Ovary (tissue), 10 donors: ENCODE measurements at regions of chr16 and their contacts with region 1.

Region 1: DNA sequence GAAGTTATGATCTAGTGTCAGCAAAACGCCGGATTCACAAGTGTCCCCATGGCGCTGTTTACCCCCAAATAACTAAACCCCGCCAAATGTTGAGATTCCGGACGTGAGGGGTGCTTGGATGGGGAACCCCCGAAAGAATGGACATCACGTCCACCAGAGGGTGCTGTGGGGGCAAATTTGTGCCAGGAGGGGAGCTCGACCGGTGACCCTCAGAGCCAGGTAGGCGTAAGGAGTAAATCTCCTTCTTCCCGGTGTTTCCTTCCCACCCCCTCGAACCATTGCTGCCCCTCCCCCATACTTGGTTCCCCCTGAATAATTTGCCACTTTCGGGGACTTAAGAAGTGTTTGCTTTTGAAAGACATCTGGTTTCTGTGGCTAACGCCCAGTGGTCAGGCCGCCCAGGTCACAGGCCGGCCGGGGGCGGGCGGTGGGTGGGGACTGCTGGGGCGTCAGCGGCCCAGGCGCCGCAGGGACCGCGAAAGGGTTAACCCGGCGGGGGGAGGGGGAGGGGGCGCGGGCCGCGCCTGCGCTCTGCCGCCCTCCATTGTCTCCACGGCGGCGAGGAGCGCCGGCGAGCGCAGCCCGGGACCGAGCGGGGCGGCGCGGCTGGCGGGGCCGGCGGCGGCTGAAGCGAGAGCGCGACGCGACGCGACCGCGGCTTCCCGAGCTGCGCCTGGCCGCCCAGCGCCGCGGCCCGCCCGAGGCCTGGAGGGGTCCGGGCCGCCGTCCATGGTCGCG is at the start of gene ZNRF1:
- DNase-seq: peak; percentile 78 to 93 (median 89)
- H3K4me3 ChIP-seq: peak within 1 kb of the TSS; percentile 80
- H3K27ac ChIP-seq: peak within 1 kb of the TSS; percentile 77 to 78
- H3K4me1 ChIP-seq: peaks cover 1% of the 10 kb centered on the region
- H3K27me3 ChIP-seq: no peaks in the 10 kb centered on the region
- CTCF ChIP-seq: peak; percentile 79 to 83 (median 80)
- EP300 ChIP-seq: no peak
- POLR2A ChIP-seq: peak; percentile 30
- total RNA-seq, gene ZNRF1: 16.8 to 27.9 (median 25.0) TPM

Region 2: GRCh38 chr16:74954763-74955162 is 43.9 kb before region 1 on chr16:
- intact Hi-C with region 1: no loop called
- DNase-seq: no peak
- H3K4me3 ChIP-seq: no peak overlapping the region
- H3K27ac ChIP-seq: no peak overlapping the region
- H3K4me1 ChIP-seq: peaks cover 1% of the 10 kb centered on the region
- H3K27me3 ChIP-seq: no peaks in the 10 kb centered on the region
- CTCF ChIP-seq: no peak
- EP300 ChIP-seq: no peak
- POLR2A ChIP-seq: no peak

Region 3: DNA sequence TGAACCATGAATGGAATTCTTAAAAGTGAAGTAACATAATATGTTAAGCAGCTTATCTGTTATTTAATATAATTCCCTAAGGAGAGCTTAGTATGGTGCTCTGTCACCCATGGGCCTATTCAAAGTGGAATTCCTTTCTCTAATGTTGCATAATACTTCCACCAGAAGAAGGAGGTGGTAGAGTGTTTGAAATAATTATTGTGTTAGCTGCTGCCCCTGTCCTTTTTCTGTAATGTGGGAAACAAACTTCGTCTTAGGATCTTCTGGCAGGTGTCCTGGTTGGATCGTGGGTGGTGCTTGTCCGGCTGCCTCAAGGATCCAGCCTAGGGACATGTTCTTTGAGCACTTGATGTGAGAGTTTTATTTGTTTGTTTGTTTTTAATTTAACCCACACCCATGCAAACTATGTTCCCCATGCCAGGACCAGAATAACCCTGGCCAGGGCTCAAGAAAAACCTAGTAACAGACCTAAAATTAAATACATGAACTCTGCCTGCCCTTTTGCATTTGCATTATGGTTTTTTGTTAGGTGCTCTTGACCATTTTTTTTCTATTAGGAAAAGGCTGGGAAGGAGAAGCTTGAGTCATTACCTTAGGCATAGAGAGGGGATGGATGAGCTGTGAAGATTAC is 46.3 kb after region 1 on chr16:
- intact Hi-C with region 1: loop called in 1 of 4 experiments (anchors 5 kb)
- DNase-seq: peak in 4 of 5 donors; percentile 28 to 48 (median 38)
- H3K4me3 ChIP-seq: no peak overlapping the region
- H3K27ac ChIP-seq: peak overlapping the region in 1 of 2 donors; percentile 58
- H3K4me1 ChIP-seq: peaks cover 17% of the 10 kb centered on the region
- H3K27me3 ChIP-seq: no peaks in the 10 kb centered on the region
- CTCF ChIP-seq: no peak
- EP300 ChIP-seq: no peak
- POLR2A ChIP-seq: no peak

Region 4: DNA sequence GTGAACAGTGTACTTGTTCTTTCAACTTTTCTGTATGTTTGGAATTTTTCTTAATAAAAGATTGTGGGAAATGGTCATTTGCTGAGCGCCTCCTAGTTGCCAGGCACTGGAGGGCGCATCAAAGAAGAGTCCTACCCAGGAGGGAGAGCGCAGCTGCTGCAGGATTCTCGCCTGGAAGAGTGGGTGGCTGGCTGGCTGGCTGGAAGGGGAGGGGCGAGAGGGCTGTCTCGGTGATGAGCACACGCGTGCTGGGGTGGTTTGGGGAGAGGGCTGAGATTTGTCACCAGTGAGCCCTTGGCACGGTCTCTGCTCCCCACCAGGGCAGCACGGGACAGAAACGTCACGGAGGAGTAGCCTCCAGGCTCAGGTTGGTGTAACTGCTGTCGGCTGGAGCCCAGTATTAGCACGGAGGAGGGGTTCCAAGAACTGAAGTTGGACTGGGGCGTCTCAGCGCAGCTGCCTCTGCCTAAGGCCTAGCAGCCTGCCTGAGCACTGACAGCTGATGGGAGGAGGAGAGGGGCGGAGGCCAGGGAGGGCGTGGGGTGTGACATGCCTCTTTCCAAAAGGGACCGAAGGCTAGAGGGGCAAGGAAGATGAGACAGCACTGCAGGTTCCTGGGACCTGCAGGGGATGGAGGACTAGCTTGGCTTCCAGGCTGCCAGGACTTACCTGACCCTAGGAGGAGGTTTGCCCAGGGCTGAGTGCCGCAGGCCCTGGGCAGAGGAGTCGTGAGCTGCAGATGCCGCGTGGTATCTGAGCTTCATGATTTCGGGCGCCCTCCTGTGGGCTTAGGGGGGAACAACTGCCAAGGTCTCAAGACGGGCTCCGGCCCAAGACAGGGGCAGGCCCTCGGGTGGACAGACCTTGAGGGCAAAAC is 112.2 kb after region 1 on chr16:
- intact Hi-C with region 1: loop called (anchors 1 to 5 kb)
- DNase-seq: peak; percentile 87 to 95 (median 94)
- H3K4me3 ChIP-seq: peak overlapping the region; percentile 13
- H3K27ac ChIP-seq: peak overlapping the region; percentile 14 to 76
- H3K4me1 ChIP-seq: peaks cover 36% of the 10 kb centered on the region
- H3K27me3 ChIP-seq: no peaks in the 10 kb centered on the region
- CTCF ChIP-seq: peak; percentile 76 to 91 (median 91)
- EP300 ChIP-seq: no peak
- POLR2A ChIP-seq: peak; percentile 8